ENCODE measurements at regions of chr17 and their contacts with region 1.

Region 1: DNA sequence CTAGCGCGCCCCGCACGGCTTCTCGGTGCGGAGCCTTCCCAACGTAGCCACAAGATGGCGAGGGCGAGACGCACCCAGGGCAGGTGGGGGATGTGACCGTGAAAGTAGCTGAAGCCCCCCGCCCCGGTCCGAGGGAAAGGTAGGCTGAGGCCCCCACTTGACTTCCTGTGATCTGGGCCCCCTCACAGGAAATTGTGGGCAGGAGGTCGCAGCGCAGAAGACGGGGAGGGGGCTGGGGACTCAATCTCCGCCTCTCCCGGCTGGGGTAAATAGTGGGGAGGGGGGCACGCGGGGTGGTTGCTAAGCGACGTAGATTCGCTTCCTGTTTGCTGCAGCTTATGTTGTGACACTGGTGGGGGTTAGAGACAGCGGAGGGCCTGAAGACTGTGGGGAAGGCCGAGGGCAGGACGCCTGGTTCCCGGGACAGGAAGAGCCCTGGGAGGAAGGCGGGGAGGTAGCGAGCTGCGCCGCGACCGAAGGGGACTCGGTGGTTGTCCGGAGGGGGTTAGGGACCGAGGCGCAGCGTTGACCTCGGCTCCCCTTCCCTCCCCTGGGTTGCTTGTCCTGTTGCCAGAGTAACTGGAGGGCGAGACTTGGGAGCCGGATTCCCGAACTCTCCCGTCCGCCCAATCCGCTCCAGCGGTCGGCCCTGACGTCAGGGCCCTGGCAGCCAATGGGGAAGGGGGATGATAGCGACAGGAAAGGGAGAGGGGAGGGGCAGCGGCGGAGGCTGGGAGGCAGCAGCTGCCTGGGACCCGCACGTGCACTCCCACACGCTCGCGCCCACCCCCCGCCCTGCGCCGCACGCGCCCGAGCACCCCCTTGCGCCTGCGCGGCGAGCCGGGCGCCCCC is 1.2 kb downstream of the KDM6B start:
- DNase-seq: peak; percentile 98
- H3K4me3 ChIP-seq: peak overlapping the region; percentile 69 to 94 (median 76)
- H3K27ac ChIP-seq: peak overlapping the region; percentile 97
- H3K4me1 ChIP-seq: peaks cover 43% of the 10 kb centered on the region
- H3K27me3 ChIP-seq: no peaks in the 10 kb centered on the region
- CTCF ChIP-seq: peak; percentile 52 to 90

Region 2: GRCh38 chr17:7809086-7809790 is 25.9 kb before region 1 on chr17:
- CTCF ChIA-PET with region 1: interaction called, 23 read pairs
- dilution Hi-C with region 1: no loop called
- in situ Hi-C with region 1: no loop called
- intact Hi-C with region 1: no loop called
- DNase-seq: peak; percentile 80
- H3K4me3 ChIP-seq: peak overlapping the region; percentile 2 to 15 (median 9)
- H3K27ac ChIP-seq: peak overlapping the region; percentile 25
- H3K4me1 ChIP-seq: peaks cover 19% of the 10 kb centered on the region
- H3K27me3 ChIP-seq: no peaks in the 10 kb centered on the region
- CTCF ChIP-seq: no peak

Region 3: DNA sequence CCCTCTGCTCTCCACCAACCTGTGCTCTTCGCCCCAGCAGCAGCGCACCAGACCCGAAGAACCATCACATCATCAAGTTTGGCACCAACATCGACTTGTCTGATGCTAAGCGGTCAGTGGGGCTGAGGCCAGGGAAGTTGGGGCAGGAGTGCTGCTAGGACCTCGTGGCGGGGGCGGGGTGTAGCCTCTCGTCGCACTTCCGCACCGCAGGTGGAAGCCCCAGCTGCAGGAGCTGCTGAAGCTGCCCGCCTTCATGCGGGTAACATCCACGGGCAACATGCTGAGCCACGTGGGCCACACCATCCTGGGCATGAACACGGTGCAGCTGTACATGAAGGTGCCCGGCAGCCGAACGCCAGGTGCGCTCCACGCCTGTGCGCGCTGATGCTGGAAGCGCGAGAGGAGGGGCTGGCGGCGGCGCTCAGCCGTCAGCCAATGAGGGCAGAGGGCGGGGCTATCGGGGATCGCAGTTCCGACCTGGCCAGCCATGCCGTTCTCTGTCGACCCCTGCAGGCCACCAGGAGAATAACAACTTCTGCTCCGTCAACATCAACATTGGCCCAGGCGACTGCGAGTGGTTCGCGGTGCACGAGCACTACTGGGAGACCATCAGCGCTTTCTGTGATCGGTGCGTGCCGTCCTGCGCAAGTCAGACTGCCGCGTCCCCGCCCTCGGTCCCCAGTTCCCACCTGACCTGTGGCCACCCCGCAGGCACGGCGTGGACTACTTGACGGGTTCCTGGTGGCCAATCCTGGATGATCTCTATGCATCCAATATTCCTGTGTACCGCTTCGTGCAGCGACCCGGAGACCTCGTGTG is 16.5 kb after region 1 on chr17:
- CTCF ChIA-PET with region 1: no interaction called
- dilution Hi-C with region 1: no loop called
- in situ Hi-C with region 1: no loop called
- intact Hi-C with region 1: loop called (anchors 1 kb)
- DNase-seq: peak; percentile 84
- H3K4me3 ChIP-seq: peak overlapping the region in 2 of 3 experiments; percentile 10 to 31
- H3K27ac ChIP-seq: no peak overlapping the region
- H3K4me1 ChIP-seq: peaks cover 46% of the 10 kb centered on the region
- H3K27me3 ChIP-seq: no peaks in the 10 kb centered on the region
- CTCF ChIP-seq: peak; percentile 79 to 93

Region 4: DNA sequence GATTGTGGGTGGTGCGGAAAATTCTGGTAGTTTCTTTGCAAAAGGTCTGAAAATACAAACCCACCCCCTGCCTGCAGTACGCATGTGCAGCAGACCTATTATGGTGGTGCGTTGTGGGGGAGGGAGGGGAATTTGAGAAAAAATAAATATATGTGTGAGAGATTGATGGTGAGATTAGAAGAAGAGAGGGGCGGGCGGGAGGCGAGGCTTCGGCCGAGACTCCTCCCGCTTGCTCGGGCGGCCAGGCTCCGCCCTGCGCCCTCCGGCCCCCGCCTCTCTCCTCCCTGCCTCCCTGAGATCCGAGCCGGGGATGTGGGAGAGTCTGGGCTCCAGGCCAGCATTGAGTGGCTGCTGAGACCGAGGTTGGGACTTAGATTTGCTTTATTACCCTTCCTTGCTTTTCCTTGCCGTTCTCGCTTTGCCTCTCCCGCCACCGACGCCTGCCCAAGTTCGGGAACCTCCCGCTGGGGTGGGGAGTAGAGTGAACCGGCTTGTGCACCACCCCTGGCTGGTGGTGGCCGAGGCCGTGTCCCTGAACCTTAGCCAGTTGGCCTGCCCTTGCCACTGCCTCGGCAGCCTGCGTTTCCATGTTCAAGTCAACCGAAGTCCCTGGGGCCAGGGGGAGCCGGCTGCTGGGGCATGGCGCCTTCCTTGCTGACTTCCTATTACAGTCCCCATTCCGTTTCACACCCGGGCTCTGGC is 52.4 kb after region 1 on chr17:
- CTCF ChIA-PET with region 1: no interaction called
- dilution Hi-C with region 1: no loop called
- in situ Hi-C with region 1: no loop called
- intact Hi-C with region 1: loop called (anchors 2 kb)
- DNase-seq: peak; percentile 92
- H3K4me3 ChIP-seq: peak overlapping the region; percentile 80 to 91 (median 90)
- H3K27ac ChIP-seq: peak overlapping the region; percentile 70
- H3K4me1 ChIP-seq: peaks cover 44% of the 10 kb centered on the region
- H3K27me3 ChIP-seq: no peaks in the 10 kb centered on the region
- CTCF ChIP-seq: no peak

Measured in mammary epithelial cell (primary cell).